H1 (cell line): ENCODE measurements at regions of chr12 and their contacts with region 1.

Region 1: DNA sequence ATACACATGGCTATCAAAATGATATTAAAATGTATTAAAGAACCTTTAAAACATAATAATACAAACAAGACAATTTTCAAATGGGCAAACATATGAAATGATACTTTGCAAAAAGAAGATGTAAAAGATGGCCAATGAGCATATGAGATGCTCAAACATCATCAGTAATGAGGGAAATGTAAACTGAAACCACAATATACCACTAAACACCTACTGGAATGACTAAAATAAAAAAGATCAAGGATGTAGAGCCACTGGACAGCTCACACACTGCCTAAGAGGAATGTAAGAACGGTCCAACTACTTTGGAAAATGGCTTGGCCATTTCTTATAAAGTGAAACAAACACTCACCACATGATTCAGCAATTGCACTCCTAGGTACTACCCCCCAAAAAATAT is 97.3 kb upstream of the BBS10 start:
- DNase-seq: no peak
- H3K4me3 ChIP-seq: no peak overlapping the region
- H3K27ac ChIP-seq: no peak overlapping the region
- H3K4me1 ChIP-seq: no peaks in the 10 kb centered on the region; a peak in 1 of 7 replicates
- H3K27me3 ChIP-seq: no peaks in the 10 kb centered on the region
- CTCF ChIP-seq: no peak
- EP300 ChIP-seq: no peak
- POLR2A ChIP-seq: no peak
- RAD21 ChIP-seq: no peak

Region 2: GRCh38 chr12:76426160-76426559 is 19.3 kb before region 1 on chr12:
- CTCF ChIA-PET with region 1: interaction called, 10 read pairs
- POLR2A ChIA-PET with region 1: no interaction called
- DNase-seq: no peak
- H3K4me3 ChIP-seq: no peak overlapping the region
- H3K27ac ChIP-seq: no peak overlapping the region
- H3K4me1 ChIP-seq: no peaks in the 10 kb centered on the region
- H3K27me3 ChIP-seq: no peaks in the 10 kb centered on the region
- CTCF ChIP-seq: no peak
- EP300 ChIP-seq: no peak
- POLR2A ChIP-seq: no peak
- RAD21 ChIP-seq: no peak

Region 3: GRCh38 chr12:76455582-76456345 is 10.3 kb after region 1 on chr12:
- CTCF ChIA-PET with region 1: interaction called, 11 read pairs
- POLR2A ChIA-PET with region 1: interaction called, 4 read pairs
- DNase-seq: no peak
- H3K4me3 ChIP-seq: no peak overlapping the region
- H3K27ac ChIP-seq: no peak overlapping the region
- H3K4me1 ChIP-seq: no peaks in the 10 kb centered on the region
- H3K27me3 ChIP-seq: no peaks in the 10 kb centered on the region
- CTCF ChIP-seq: peak in 2 of 3 experiments; percentile 55 to 63; a peak in 3 of 4 replicates
- EP300 ChIP-seq: no peak
- POLR2A ChIP-seq: no peak
- RAD21 ChIP-seq: peak; percentile 83